Activated CD4-positive, alpha-beta memory T cell treated with anti-CD3 and anti-CD28 coated beads for 36 hours (primary cell): ENCODE measurements at regions of chr6 and their contacts with region 1.

Region 1: GRCh38 chr6:31862344-31863227 is at the start of gene NEU1:
- DNase-seq: peak; percentile 100
- H3K4me3 Mint-ChIP-seq: peak within 1 kb of the TSS; percentile 95
- H3K27ac Mint-ChIP-seq: peak within 1 kb of the TSS; percentile 89
- H3K4me1 Mint-ChIP-seq: peaks cover 20% of the 10 kb centered on the region
- H3K27me3 Mint-ChIP-seq: peaks cover 2% of the 10 kb centered on the region
- total RNA-seq, gene NEU1: 13.0 to 13.4 TPM

Region 2: GRCh38 chr6:31631681-31632278 is 230.8 kb before region 1 on chr6:
- CTCF ChIA-PET with region 1: no interaction called
- POLR2A ChIA-PET with region 1: no interaction called
- intact Hi-C with region 1: no loop called
- DNase-seq: no peak
- H3K4me3 Mint-ChIP-seq: no peak overlapping the region
- H3K27ac Mint-ChIP-seq: no peak overlapping the region
- H3K4me1 Mint-ChIP-seq: no peaks in the 10 kb centered on the region
- H3K27me3 Mint-ChIP-seq: no peaks in the 10 kb centered on the region

Region 3: DNA sequence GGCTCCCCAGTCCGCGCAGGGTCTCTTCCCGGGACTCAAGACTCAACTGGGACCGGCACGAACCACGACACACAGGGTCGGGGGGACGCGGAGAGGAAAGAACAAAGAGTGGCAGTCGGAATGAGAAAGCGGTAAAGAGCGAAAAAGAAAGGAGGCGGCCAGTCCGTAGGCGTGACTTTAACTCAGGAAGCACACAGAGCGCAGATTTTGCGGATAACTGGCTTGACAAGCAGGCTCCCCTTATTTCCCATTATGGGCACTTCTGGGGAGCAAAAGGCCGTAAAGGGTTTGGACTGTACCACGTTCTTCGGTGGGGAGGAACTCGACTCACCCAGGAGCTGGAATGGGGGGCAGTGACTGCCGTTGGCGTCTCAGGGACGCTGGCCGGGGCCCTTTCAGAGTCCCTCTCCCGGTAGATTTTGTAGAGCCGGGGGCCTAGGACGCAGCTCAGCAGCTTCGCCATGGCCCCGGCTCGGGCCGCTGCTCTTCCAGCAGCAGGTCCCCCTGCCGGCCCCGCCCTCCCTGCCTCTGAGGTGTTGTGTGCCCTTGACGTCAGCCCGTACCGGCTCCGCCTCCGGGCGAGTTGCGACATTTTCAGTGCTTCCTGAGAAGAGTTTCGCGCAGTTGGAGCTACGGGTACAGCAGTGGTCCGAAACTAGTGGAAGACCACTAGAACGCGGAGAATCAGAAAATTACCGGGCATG is 159.6 kb before region 1 on chr6 and contains the start of gene ABHD16A:
- CTCF ChIA-PET with region 1: no interaction called
- POLR2A ChIA-PET with region 1: no interaction called
- intact Hi-C with region 1: loop called (anchors 1 kb)
- DNase-seq: peak; percentile 99
- H3K4me3 Mint-ChIP-seq: peak within 1 kb of the TSS; percentile 99
- H3K27ac Mint-ChIP-seq: peak within 1 kb of the TSS; percentile 97
- H3K4me1 Mint-ChIP-seq: peaks cover 18% of the 10 kb centered on the region
- H3K27me3 Mint-ChIP-seq: no peaks in the 10 kb centered on the region
- total RNA-seq, gene ABHD16A: 29.1 to 29.6 TPM

Region 4: DNA sequence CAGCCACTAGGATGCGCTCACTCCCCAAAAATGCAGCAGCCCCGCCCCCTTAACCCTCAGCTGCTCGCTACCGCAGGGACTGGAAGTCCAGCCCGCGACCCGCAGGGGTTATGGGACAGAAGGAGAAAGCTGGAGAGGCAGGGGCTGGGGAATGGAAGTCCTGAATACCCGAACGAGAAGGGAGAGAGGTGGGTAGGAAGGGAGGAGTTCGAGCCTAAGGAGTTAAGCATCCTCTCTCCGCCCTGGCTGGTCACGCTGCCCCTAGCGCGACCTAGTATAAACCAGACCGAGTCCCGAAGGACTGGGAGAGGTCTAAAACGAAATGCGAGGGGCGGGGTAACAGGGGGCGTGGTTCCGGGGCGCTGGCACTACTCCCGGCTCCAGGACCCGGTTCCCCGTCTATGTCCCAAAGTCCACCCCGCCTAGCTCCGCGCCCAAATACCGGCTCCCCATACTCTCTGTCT is 133.0 kb before region 1 on chr6:
- CTCF ChIA-PET with region 1: interaction called, 10 read pairs
- POLR2A ChIA-PET with region 1: interaction called, 5 read pairs
- intact Hi-C with region 1: no loop called
- DNase-seq: peak; percentile 84
- H3K4me3 Mint-ChIP-seq: peak overlapping the region; percentile 80
- H3K27ac Mint-ChIP-seq: peak overlapping the region; percentile 43
- H3K4me1 Mint-ChIP-seq: peaks cover 69% of the 10 kb centered on the region
- H3K27me3 Mint-ChIP-seq: no peaks in the 10 kb centered on the region

Region 5: GRCh38 chr6:31834434-31835198 is 28.0 kb before region 1 on chr6:
- CTCF ChIA-PET with region 1: interaction called, 11 read pairs
- POLR2A ChIA-PET with region 1: interaction called, 6 read pairs
- intact Hi-C with region 1: loop called (anchors 1 kb)
- DNase-seq: peak; percentile 85
- H3K4me3 Mint-ChIP-seq: peak overlapping the region; percentile 97
- H3K27ac Mint-ChIP-seq: peak overlapping the region; percentile 97
- H3K4me1 Mint-ChIP-seq: peaks cover 40% of the 10 kb centered on the region
- H3K27me3 Mint-ChIP-seq: no peaks in the 10 kb centered on the region

Region 6: GRCh38 chr6:31897612-31898382 is 35.2 kb after region 1 on chr6 and contains the start of gene EHMT2:
- CTCF ChIA-PET with region 1: interaction called, 4 read pairs
- POLR2A ChIA-PET with region 1: interaction called, 9 read pairs
- intact Hi-C with region 1: loop called (anchors 1 kb)
- DNase-seq: peak; percentile 91
- H3K4me3 Mint-ChIP-seq: peak within 1 kb of the TSS; percentile 94
- H3K27ac Mint-ChIP-seq: peak within 1 kb of the TSS; percentile 94
- H3K4me1 Mint-ChIP-seq: peaks cover 34% of the 10 kb centered on the region
- H3K27me3 Mint-ChIP-seq: no peaks in the 10 kb centered on the region
- total RNA-seq, gene EHMT2: 45.5 to 46.0 TPM

Region 7: GRCh38 chr6:31940256-31940664 is 77.7 kb after region 1 on chr6:
- CTCF ChIA-PET with region 1: no interaction called
- POLR2A ChIA-PET with region 1: no interaction called
- intact Hi-C with region 1: no loop called
- DNase-seq: no peak
- H3K4me3 Mint-ChIP-seq: no peak overlapping the region
- H3K27ac Mint-ChIP-seq: no peak overlapping the region
- H3K4me1 Mint-ChIP-seq: peaks cover 2% of the 10 kb centered on the region
- H3K27me3 Mint-ChIP-seq: peaks cover 16% of the 10 kb centered on the region